ENCODE measurements at regions of chr5 and their contacts with region 1.

Region 1: DNA sequence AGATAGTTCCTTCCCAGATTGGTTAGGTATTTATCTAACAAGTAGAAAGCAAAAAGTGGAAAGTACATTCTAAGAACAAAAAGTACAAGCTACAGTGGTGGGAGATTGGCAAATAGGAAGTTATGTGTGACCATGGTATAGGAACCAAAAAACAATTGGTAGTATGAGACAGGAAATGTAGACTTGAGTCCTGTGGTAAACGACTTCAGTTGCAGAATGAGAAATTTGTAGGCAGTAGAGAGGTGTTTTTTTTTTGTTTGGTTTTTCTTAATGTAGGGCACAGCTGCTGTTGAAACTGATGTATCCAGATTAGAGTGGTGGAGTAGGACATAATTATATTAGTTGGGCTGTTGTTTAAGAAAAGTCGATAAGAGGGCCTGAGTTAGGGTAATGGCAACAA is 72.0 kb downstream of the CCNH start:
- DNase-seq: peak in 7 of 9 donors; percentile 8 to 77 (median 55)
- ATAC-seq: peak; percentile 93
- H3K4me3 ChIP-seq: no peak overlapping the region
- H3K4me3 Mint-ChIP-seq: peak overlapping the region; percentile 2 to 81 (median 70)
- H3K27ac ChIP-seq: peak overlapping the region; percentile 54
- H3K27ac Mint-ChIP-seq: peak overlapping the region; percentile 72 to 95 (median 85)
- H3K4me1 ChIP-seq: peaks cover 6 to 8% of the 10 kb centered on the region in 2 donors
- H3K4me1 Mint-ChIP-seq: peaks cover 14 to 39% (median 30%) of the 10 kb centered on the region in 7 donors
- H3K27me3 ChIP-seq: no peaks in the 10 kb centered on the region
- H3K27me3 Mint-ChIP-seq: no peaks in the 10 kb centered on the region

Region 2: GRCh38 chr5:86917117-86917579 is 423.6 kb before region 1 on chr5:
- CTCF ChIA-PET with region 1: no interaction called
- POLR2A ChIA-PET with region 1: no interaction called
- intact Hi-C with region 1: loop called in 1 of 2 experiments (anchors 5 kb)
- DNase-seq: peak in 1 of 9 donors; percentile 1
- ATAC-seq: no peak
- H3K4me3 ChIP-seq: no peak overlapping the region
- H3K4me3 Mint-ChIP-seq: peak overlapping the region in 1 of 10 donors; percentile 54
- H3K27ac ChIP-seq: no peak overlapping the region
- H3K27ac Mint-ChIP-seq: peak overlapping the region in 1 of 9 donors; percentile 32
- H3K4me1 ChIP-seq: no peaks in the 10 kb centered on the region
- H3K4me1 Mint-ChIP-seq: peaks cover 0 to 17% (median 0%) of the 10 kb centered on the region in 7 donors
- H3K27me3 ChIP-seq: no peaks in the 10 kb centered on the region
- H3K27me3 Mint-ChIP-seq: peaks cover 0 to 21% (median 7%) of the 10 kb centered on the region in 5 donors

Region 3: GRCh38 chr5:87282269-87282668 is 58.4 kb before region 1 on chr5:
- CTCF ChIA-PET with region 1: no interaction called
- POLR2A ChIA-PET with region 1: no interaction called
- intact Hi-C with region 1: loop called in 1 of 2 experiments (anchors 5 kb)
- DNase-seq: peak in 7 of 9 donors; percentile 18 to 68 (median 54)
- ATAC-seq: peak; percentile 86
- H3K4me3 ChIP-seq: peak overlapping the region; percentile 27
- H3K4me3 Mint-ChIP-seq: peak overlapping the region; percentile 56 to 89 (median 80)
- H3K27ac ChIP-seq: peak overlapping the region; percentile 72
- H3K27ac Mint-ChIP-seq: peak overlapping the region; percentile 79 to 96 (median 90)
- H3K4me1 ChIP-seq: peaks cover 14 to 26% of the 10 kb centered on the region in 2 donors
- H3K4me1 Mint-ChIP-seq: peaks cover 34 to 82% (median 64%) of the 10 kb centered on the region in 7 donors
- H3K27me3 ChIP-seq: no peaks in the 10 kb centered on the region
- H3K27me3 Mint-ChIP-seq: no peaks in the 10 kb centered on the region

Region 4: DNA sequence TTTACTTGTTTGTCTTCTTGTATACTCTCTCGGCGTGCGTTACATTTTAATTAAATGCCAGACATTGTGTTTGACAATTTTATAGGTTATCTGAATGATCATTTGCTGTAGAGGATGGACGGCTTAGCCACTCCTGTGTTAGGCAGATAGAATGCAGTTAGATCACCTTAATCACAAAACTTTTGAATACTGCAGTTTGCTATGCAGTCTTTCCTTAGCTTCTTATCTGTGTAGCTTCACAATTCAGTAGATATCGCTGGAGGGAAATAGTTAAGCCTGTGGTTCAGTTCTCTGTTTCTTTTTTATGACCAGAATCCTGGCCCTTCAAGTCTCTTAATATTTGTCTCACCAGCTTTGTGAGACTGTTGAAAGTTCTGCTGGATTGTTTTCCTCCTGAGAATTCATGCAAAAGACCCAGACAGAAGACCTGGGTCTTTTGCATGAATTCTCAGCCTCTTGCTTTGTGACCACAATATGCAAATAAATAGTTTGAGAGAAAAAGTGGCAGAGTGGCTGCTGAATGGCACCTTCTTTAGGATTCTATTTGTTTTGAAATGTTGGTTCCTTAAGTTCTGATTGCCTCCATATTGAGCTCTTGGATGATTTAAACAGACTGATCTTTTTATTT is 32.8 kb before region 1 on chr5:
- CTCF ChIA-PET with region 1: no interaction called
- POLR2A ChIA-PET with region 1: no interaction called
- intact Hi-C with region 1: loop called in 1 of 2 experiments (anchors 2 kb)
- DNase-seq: no peak
- ATAC-seq: no peak
- H3K4me3 ChIP-seq: no peak overlapping the region
- H3K4me3 Mint-ChIP-seq: peak overlapping the region in 2 of 10 donors; percentile 16 to 30
- H3K27ac ChIP-seq: no peak overlapping the region
- H3K27ac Mint-ChIP-seq: peak overlapping the region in 4 of 9 donors; percentile 12 to 69 (median 38)
- H3K4me1 ChIP-seq: peaks cover 0 to 9% of the 10 kb centered on the region in 2 donors
- H3K4me1 Mint-ChIP-seq: peaks cover 15 to 78% (median 56%) of the 10 kb centered on the region in 7 donors
- H3K27me3 ChIP-seq: no peaks in the 10 kb centered on the region
- H3K27me3 Mint-ChIP-seq: no peaks in the 10 kb centered on the region

Region 5: GRCh38 chr5:87327998-87328397 is 12.7 kb before region 1 on chr5:
- CTCF ChIA-PET with region 1: no interaction called
- POLR2A ChIA-PET with region 1: no interaction called
- intact Hi-C with region 1: no loop called
- DNase-seq: no peak
- ATAC-seq: no peak
- H3K4me3 ChIP-seq: no peak overlapping the region
- H3K4me3 Mint-ChIP-seq: no peak overlapping the region
- H3K27ac ChIP-seq: no peak overlapping the region
- H3K27ac Mint-ChIP-seq: peak overlapping the region in 5 of 9 donors; percentile 5 to 82 (median 54)
- H3K4me1 ChIP-seq: peaks cover 0 to 15% of the 10 kb centered on the region in 2 donors
- H3K4me1 Mint-ChIP-seq: peaks cover 27 to 80% (median 55%) of the 10 kb centered on the region in 7 donors
- H3K27me3 ChIP-seq: no peaks in the 10 kb centered on the region
- H3K27me3 Mint-ChIP-seq: no peaks in the 10 kb centered on the region

Region 6: DNA sequence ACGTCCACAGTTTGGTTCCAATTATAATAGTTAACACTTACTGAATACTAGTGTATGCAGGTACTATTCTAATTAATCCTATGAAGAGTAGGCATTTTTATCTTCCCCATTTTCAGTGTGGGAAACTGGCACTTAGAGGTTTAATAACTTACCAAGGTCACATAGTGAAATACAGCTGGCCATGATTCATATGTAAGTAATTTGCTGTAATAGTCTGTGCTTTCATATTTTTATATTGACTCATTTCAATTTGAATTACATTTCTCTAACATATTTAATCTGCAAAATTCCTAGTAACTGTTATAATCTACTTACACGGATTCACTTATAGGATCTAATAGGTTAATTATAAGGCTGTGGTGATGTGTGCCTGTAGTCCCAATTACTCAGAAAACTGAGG is 52.6 kb after region 1 on chr5:
- CTCF ChIA-PET with region 1: no interaction called
- POLR2A ChIA-PET with region 1: interaction called, 3 read pairs
- intact Hi-C with region 1: loop called in 1 of 2 experiments (anchors 5 kb)
- DNase-seq: no peak
- ATAC-seq: no peak
- H3K4me3 ChIP-seq: no peak overlapping the region
- H3K4me3 Mint-ChIP-seq: no peak overlapping the region
- H3K27ac ChIP-seq: no peak overlapping the region
- H3K27ac Mint-ChIP-seq: peak overlapping the region in 3 of 9 donors; percentile 33 to 74 (median 36)
- H3K4me1 ChIP-seq: no peaks in the 10 kb centered on the region
- H3K4me1 Mint-ChIP-seq: peaks cover 6 to 34% (median 20%) of the 10 kb centered on the region in 7 donors
- H3K27me3 ChIP-seq: no peaks in the 10 kb centered on the region
- H3K27me3 Mint-ChIP-seq: no peaks in the 10 kb centered on the region

Measured in naive thymus-derived CD4-positive, alpha-beta T cell (primary cell).